Activated T-helper 2 cell treated with anti-CD3 and anti-CD28 coated beads, Interferon-gamma antibody, Interleukin-2, Interleukin-4, amounts not matched to agents 10 μg/mL and 5 μg/mL and 100 μg/mL, durations not matched to agents 14 hours and 24 hours and 36 hours (primary cell): ENCODE measurements at regions of chr6 and their contacts with region 1.

Region 1: GRCh38 chr6:5827056-5827904 is 179.4 kb downstream of the NRN1 start:
- DNase-seq: no peak
- H3K4me3 Mint-ChIP-seq: no peak overlapping the region
- H3K27ac Mint-ChIP-seq: no peak overlapping the region
- H3K4me1 Mint-ChIP-seq: peaks cover 36% of the 10 kb centered on the region
- H3K27me3 Mint-ChIP-seq: no peaks in the 10 kb centered on the region

Region 2: DNA sequence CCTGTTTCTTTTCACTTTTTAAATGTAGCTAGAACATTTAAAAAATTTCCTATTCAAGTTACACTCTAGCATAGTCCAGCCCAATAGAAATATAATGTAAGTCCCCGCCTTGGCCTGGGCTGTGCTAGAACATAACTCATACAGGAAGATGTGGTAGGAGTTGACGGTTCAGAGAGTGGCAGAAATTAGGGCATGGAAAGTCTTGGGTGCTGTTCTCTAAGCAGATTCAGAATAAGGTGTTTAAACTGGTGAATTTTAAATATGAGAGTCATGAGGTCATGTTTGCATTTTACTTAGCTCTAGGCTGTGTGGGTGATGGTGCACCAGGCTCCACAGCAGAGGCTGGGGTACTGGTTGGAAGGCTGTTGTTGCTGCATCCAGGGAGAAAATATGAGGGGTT is 309.5 kb before region 1 on chr6:
- intact Hi-C with region 1: no loop called
- DNase-seq: no peak
- H3K4me3 Mint-ChIP-seq: peak overlapping the region; percentile 48
- H3K27ac Mint-ChIP-seq: peak overlapping the region; percentile 76
- H3K4me1 Mint-ChIP-seq: peaks cover 48% of the 10 kb centered on the region
- H3K27me3 Mint-ChIP-seq: no peaks in the 10 kb centered on the region

Region 3: DNA sequence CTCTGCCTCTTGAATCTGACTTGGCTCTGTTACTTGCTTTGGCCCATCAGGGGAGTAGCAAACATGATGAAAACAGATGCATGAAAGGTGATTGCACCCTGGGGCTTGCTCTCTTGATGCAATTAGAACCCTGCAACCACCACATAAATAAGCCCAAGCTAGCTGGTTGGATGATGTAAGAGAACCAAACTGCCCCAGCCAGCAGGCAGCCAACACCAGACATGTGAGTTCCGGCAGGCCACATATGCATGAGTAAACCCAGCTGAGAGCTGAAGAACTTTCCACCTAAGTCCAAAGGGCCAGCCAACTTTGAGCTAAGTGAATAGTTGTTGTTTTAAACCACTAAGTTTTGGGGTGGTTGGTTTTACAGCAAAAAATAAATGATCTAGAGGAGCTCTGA is 297.5 kb before region 1 on chr6:
- intact Hi-C with region 1: no loop called
- DNase-seq: no peak
- H3K4me3 Mint-ChIP-seq: no peak overlapping the region
- H3K27ac Mint-ChIP-seq: no peak overlapping the region
- H3K4me1 Mint-ChIP-seq: peaks cover 13% of the 10 kb centered on the region
- H3K27me3 Mint-ChIP-seq: no peaks in the 10 kb centered on the region

Region 4: DNA sequence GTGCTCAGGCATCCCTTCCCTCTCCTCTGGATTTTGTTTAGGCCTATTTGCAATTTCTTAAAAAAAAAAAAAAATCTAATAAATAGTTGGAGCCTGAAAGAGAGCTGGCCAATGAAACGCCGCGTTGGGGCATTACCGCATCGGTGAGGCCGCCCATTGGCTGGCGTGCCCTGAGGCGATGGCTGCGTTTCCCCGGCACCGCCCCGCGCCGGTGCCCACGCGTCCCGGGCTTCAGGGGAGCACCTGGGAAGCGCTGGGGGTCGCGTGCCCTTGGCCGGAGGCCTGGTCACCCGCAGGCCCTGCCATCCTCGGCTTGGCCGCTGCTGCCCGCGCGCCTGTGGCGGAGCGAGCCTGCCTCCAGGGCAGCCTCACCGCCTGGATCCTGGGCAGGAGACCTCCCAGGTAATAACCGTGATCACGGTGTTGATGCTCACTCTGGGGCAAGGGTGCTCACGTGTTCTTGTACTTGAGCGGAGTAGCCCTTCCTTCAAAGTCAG is 24.0 kb after region 1 on chr6:
- intact Hi-C with region 1: loop called (anchors 2 kb)
- DNase-seq: peak; percentile 57
- H3K4me3 Mint-ChIP-seq: peak overlapping the region; percentile 71
- H3K27ac Mint-ChIP-seq: no peak overlapping the region
- H3K4me1 Mint-ChIP-seq: peaks cover 10% of the 10 kb centered on the region
- H3K27me3 Mint-ChIP-seq: peaks cover 13% of the 10 kb centered on the region